ENCODE measurements at regions of chr9 and their contacts with region 1.

Region 1: GRCh38 chr9:1009101-1009707 is 32.7 kb downstream of the DMRT3 start:
- DNase-seq: peak; percentile 48 to 91 (median 84)
- H3K4me3 ChIP-seq: peak overlapping the region in 4 of 59 donors; percentile 1 to 30 (median 17)
- H3K27ac ChIP-seq: no peak overlapping the region
- H3K27me3 ChIP-seq: peaks cover 0 to 18% (median 0%) of the 10 kb centered on the region in 45 donors
- CTCF ChIP-seq: peak; percentile 76 to 100 (median 97)

Region 2: GRCh38 chr9:354453-354852 is 654.8 kb before region 1 on chr9:
- intact Hi-C with region 1: loop called in 1 of 2 experiments (anchors 10 kb)
- DNase-seq: no peak
- H3K4me3 ChIP-seq: no peak overlapping the region
- H3K27ac ChIP-seq: no peak overlapping the region
- H3K27me3 ChIP-seq: peaks cover 0 to 11% (median 0%) of the 10 kb centered on the region in 45 donors
- CTCF ChIP-seq: no peak

Region 3: GRCh38 chr9:385818-386398 is 623.3 kb before region 1 on chr9:
- intact Hi-C with region 1: loop called (anchors 10 kb)
- DNase-seq: peak in 7 of 10 donors; percentile 28 to 65 (median 52)
- H3K4me3 ChIP-seq: no peak overlapping the region
- H3K27ac ChIP-seq: no peak overlapping the region
- H3K27me3 ChIP-seq: peaks cover 0 to 4% (median 0%) of the 10 kb centered on the region in 45 donors
- CTCF ChIP-seq: peak; percentile 59 to 97 (median 88)

Region 4: GRCh38 chr9:859251-859650 is 150.0 kb before region 1 on chr9:
- intact Hi-C with region 1: no loop called
- DNase-seq: no peak
- H3K4me3 ChIP-seq: no peak overlapping the region
- H3K27ac ChIP-seq: no peak overlapping the region
- H3K27me3 ChIP-seq: peaks cover 0 to 17% (median 3%) of the 10 kb centered on the region in 45 donors
- CTCF ChIP-seq: no peak

Region 5: DNA sequence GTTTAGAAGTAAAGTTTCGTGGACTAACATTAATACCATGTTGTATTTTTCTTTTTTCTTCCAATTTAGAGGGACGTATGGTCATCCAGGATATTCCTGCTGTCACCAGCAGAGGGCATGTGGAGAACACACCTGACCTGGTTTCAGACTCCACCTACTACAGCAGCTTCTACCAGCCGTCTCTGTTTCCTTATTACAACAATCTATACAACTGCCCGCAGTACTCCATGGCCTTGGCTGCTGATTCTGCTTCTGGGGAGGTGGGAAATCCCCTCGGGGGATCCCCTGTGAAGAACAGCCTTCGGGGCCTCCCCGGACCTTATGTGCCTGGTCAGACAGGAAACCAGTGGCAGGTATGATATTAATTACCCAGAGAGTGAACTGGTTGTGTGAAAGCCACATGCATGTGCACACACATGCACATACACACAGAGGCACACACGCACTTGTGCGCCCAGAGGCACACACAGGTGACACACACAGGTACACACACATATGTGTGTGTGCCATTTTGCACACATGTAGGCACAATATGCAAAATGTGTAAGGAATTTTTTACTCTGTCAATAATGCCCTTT is 115.3 kb before region 1 on chr9:
- intact Hi-C with region 1: loop called (anchors 2 to 5 kb)
- DNase-seq: peak in 5 of 10 donors; percentile 43 to 55 (median 48)
- H3K4me3 ChIP-seq: peak overlapping the region in 3 of 59 donors; percentile 25 to 32 (median 32)
- H3K27ac ChIP-seq: no peak overlapping the region
- H3K27me3 ChIP-seq: peaks cover 0 to 8% (median 0%) of the 10 kb centered on the region in 45 donors
- CTCF ChIP-seq: peak; percentile 46 to 83 (median 73)

Measured in dorsolateral prefrontal cortex (tissue), 120 donors.